ENCODE measurements at regions of chr5 and their contacts with region 1.

Region 1: GRCh38 chr5:81751009-81751835 is at the start of gene SSBP2:
- DNase-seq: peak; percentile 73 to 98
- ATAC-seq: peak; percentile 81 to 90
- H3K4me3 ChIP-seq: peak within 1 kb of the TSS; percentile 92
- H3K27ac ChIP-seq: peak within 1 kb of the TSS; percentile 95 to 98
- H3K4me1 ChIP-seq: peaks cover 27% of the 10 kb centered on the region
- CTCF ChIP-seq: no peak
- EP300 ChIP-seq: peak; percentile 49 to 71; a peak in 2 of 5 replicates
- POLR2A ChIP-seq: peak; percentile 51
- RAD21 ChIP-seq: peak; percentile 60 to 92
- polyA plus RNA-seq, gene SSBP2: 14.2 and 17.0 TPM in 2 replicates

Region 2: GRCh38 chr5:81093537-81094196 is 657.6 kb before region 1 on chr5:
- CTCF ChIA-PET with region 1: no interaction called
- POLR2A ChIA-PET with region 1: no interaction called
- DNase-seq: no peak
- ATAC-seq: 0 out of 6 replicates have a peak, but pooled peaks of 1 of the 2 experiments have one; percentile 45
- H3K4me3 ChIP-seq: no peak overlapping the region
- H3K27ac ChIP-seq: no peak overlapping the region
- H3K4me1 ChIP-seq: no peaks in the 10 kb centered on the region
- CTCF ChIP-seq: no peak
- EP300 ChIP-seq: no peak
- POLR2A ChIP-seq: no peak
- RAD21 ChIP-seq: no peak

Region 3: DNA sequence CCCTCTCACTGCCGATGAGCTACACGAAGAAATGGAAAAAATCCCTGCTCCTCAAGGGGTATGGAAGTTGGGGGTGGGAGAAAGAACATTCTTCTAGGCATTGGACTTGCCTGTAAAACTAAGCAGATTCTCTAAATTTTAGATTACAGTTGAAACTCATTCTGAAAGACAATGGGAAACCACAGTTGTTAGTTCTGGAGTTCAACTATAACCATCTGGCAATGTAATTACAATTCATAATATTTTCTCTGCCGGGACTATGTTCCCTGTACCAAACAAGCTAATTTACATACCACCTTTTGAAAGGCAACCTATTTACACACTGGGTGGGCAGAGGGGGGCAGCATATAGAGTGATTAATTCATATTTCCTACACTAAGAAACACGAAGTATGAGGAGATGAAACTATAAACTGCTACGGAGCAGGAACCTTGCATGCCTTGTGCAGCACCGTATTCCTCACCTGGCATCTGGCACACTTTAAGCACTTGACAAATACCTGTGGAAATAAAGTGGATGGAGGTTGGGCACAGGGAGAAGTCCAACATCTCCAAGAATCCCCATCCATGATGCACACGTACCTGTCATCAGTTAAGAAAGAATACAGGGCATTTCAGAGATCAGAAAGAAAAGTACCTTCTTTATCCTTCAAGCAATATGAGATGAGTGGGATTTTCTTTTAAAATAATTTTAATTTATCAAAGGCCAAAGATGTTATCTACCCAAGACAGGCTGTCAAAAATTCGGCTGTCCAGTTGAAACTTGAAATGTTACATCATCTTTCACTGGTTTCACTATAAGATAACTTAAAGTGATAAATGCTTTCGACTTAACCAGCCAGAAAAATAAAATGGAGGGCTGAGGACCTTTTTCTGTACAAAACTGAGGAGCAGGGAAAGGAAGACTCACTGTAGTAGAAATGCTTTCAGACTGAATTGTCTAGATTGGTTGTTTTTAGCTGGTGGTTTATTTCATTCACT is 54.5 kb before region 1 on chr5:
- CTCF ChIA-PET with region 1: no interaction called
- POLR2A ChIA-PET with region 1: no interaction called
- DNase-seq: no peak
- ATAC-seq: no peak
- H3K4me3 ChIP-seq: no peak overlapping the region
- H3K27ac ChIP-seq: no peak overlapping the region
- H3K4me1 ChIP-seq: no peaks in the 10 kb centered on the region
- CTCF ChIP-seq: no peak
- EP300 ChIP-seq: no peak
- POLR2A ChIP-seq: no peak
- RAD21 ChIP-seq: no peak

Region 4: GRCh38 chr5:81971712-81972495 is 220.7 kb after region 1 on chr5 and contains the start of gene ATG10:
- CTCF ChIA-PET with region 1: no interaction called
- POLR2A ChIA-PET with region 1: interaction called, 17 read pairs
- DNase-seq: peak; percentile 91 to 95
- ATAC-seq: peak; percentile 96 to 98
- H3K4me3 ChIP-seq: peak within 1 kb of the TSS; percentile 63
- H3K27ac ChIP-seq: peak within 1 kb of the TSS; percentile 90 to 94
- H3K4me1 ChIP-seq: peaks cover 13% of the 10 kb centered on the region
- CTCF ChIP-seq: no peak
- EP300 ChIP-seq: no peak
- POLR2A ChIP-seq: peak; percentile 72
- RAD21 ChIP-seq: peak in 1 of 2 experiments; percentile 26; a peak in 2 of 5 replicates
- polyA plus RNA-seq, gene ATG10: 12.7 and 14.0 TPM in 2 replicates

Measured in A549 (cell line).